Calu3 (cell line): ENCODE measurements at regions of chr2 and their contacts with region 1.

Region 1: GRCh38 chr2:121974897-121975661 is 219.6 kb downstream of the TSN start:
- DNase-seq: peak; percentile 53
- H3K4me3 Mint-ChIP-seq: no peak overlapping the region
- H3K27ac Mint-ChIP-seq: no peak overlapping the region
- H3K4me1 Mint-ChIP-seq: no peaks in the 10 kb centered on the region
- H3K27me3 Mint-ChIP-seq: peaks cover 32% of the 10 kb centered on the region
- CTCF ChIP-seq: peak; percentile 77

Region 2: DNA sequence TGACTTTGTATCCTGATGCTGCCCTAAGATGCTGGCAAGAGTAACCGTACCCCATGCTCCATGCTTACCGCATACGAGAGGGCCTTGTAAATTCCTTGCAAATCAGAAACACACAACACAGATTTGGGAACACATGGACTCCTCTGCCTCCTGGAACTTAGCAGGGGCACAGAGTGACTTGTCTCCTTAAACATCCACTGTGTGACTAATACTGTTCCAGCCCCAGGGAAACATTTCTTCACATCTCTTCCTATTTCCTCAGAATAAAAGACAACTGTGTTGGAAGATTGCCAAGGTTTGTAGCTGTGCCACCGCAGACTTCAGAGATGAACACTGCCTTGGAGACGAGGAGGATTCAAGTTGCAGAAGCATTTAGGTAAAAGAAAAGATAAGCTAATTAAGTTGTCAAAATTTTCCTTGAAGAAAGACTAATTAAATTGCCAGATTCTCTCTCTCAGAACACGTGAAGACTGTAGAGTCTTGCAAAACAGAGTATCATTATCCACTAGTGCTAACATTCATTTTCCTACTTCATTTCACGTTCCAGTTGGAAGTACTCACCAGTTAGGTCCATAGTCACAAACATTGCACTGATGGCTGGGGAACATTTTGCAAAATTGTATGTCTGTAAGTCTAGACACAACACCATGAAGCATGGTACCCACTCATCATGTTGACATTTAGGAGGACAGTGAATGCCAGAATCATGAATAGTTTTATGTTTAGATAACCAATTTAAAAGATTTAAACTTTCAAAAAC is 30.8 kb before region 1 on chr2:
- CTCF ChIA-PET with region 1: no interaction called
- intact Hi-C with region 1: no loop called
- DNase-seq: no peak
- H3K4me3 Mint-ChIP-seq: no peak overlapping the region
- H3K27ac Mint-ChIP-seq: no peak overlapping the region
- H3K4me1 Mint-ChIP-seq: no peaks in the 10 kb centered on the region
- H3K27me3 Mint-ChIP-seq: peaks cover 45% of the 10 kb centered on the region
- CTCF ChIP-seq: no peak

Region 3: DNA sequence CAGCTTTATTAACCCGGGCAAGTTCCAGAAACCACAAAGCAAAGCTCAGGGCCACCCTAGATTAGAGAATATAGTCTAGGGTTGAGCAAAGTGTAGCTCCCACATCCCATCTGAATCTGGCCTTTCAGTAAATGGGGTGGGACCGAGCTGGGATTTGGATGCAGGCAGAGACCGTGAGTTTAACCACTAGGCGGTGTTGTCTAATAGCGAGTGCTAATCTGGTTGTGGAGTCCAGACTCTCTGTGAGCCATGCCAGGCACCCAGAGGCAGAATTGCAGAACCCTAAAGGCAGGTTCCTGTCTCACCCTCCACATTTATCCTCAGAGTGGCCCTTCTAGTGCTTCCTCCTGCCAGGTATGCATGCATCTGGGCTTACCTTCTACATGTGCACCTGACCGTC is 216.3 kb after region 1 on chr2:
- CTCF ChIA-PET with region 1: no interaction called
- intact Hi-C with region 1: loop called (anchors 2 kb)
- DNase-seq: peak; percentile 70
- H3K4me3 Mint-ChIP-seq: no peak overlapping the region
- H3K27ac Mint-ChIP-seq: no peak overlapping the region
- H3K4me1 Mint-ChIP-seq: no peaks in the 10 kb centered on the region
- H3K27me3 Mint-ChIP-seq: peaks cover 49% of the 10 kb centered on the region
- CTCF ChIP-seq: peak; percentile 60

Region 4: GRCh38 chr2:122378521-122378920 is 403.4 kb after region 1 on chr2:
- CTCF ChIA-PET with region 1: no interaction called
- intact Hi-C with region 1: loop called (anchors 10 kb)
- DNase-seq: no peak
- H3K4me3 Mint-ChIP-seq: no peak overlapping the region
- H3K27ac Mint-ChIP-seq: no peak overlapping the region
- H3K4me1 Mint-ChIP-seq: no peaks in the 10 kb centered on the region
- H3K27me3 Mint-ChIP-seq: peaks cover 14% of the 10 kb centered on the region
- CTCF ChIP-seq: no peak

Region 5: DNA sequence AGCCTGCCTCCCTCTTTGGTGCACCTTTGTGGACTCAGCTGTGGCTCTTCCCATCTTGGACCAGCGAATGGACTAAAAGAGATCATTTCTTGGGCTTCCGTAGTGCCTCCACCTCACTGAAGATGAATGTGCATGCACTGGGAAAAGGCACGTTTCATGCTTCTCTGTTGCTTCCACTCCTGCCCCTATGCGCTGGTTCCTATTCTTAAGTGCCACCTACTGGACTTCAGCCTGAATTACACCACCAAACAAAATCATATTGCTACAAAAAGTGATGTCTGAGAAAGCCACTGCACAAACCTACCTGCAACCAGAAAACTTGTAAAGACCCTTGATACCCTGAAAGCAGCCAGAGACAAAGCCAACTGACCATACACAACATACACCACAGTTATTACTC is 476.0 kb after region 1 on chr2:
- CTCF ChIA-PET with region 1: no interaction called
- intact Hi-C with region 1: loop called (anchors 1 kb)
- DNase-seq: no peak
- H3K4me3 Mint-ChIP-seq: no peak overlapping the region
- H3K27ac Mint-ChIP-seq: no peak overlapping the region
- H3K4me1 Mint-ChIP-seq: no peaks in the 10 kb centered on the region
- H3K27me3 Mint-ChIP-seq: no peaks in the 10 kb centered on the region
- CTCF ChIP-seq: peak; percentile 49

Region 6: DNA sequence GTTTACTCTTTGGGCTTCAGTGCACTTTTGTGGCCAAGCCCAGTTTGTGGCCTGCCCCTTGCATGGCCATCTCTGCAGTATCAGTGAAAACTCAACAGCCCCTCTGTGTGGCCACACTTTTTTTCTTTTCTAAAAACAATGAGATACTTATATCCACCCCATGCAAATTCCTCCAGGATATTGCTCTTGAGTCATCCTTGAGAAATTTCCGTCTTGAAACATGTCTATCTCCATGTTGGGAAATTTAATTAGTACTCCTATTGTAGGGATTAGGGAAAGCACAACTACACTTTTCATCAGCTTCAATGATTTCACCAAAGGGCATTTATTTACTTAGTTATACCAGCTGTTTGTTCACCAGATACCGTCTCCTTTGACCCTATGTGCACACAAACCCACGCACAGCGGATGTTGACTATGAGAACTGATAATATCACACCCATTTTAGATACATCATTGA is 773.5 kb after region 1 on chr2:
- CTCF ChIA-PET with region 1: no interaction called
- intact Hi-C with region 1: loop called (anchors 10 kb)
- DNase-seq: peak; percentile 30
- H3K4me3 Mint-ChIP-seq: no peak overlapping the region
- H3K27ac Mint-ChIP-seq: peak overlapping the region; percentile 42
- H3K4me1 Mint-ChIP-seq: no peaks in the 10 kb centered on the region
- H3K27me3 Mint-ChIP-seq: no peaks in the 10 kb centered on the region
- CTCF ChIP-seq: no peak